Mammary epithelial cell (primary cell): ENCODE measurements at regions of chr4 and their contacts with region 1.

Region 1: GRCh38 chr4:185711726-185712125 is 100.3 kb downstream of the SORBS2 start:
- DNase-seq: peak; percentile 82
- H3K4me3 ChIP-seq: no peak overlapping the region
- H3K27ac ChIP-seq: peak overlapping the region; percentile 8
- H3K4me1 ChIP-seq: peaks cover 33% of the 10 kb centered on the region
- H3K27me3 ChIP-seq: no peaks in the 10 kb centered on the region
- CTCF ChIP-seq: no peak

Region 2: DNA sequence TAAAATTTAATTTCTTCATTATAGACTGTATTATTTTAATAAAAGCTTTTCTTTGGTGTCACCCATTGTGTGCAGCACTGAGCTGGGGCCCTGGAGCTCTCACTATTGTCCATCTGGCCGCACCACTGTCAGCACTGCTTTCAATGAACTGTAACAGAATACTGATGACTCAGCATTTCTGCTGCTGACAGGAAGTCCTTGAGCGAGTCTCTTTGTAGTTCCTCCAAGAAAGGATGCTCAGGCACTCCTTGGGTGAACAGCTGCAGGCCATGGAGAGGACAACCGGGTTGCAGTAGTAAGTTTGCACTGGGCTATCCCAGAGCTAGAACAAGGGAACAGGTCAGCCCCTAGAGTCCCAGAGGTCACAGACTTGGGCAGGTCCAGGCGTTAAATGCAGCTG is 18.7 kb after region 1 on chr4:
- CTCF ChIA-PET with region 1: interaction called, 5 read pairs
- dilution Hi-C with region 1: no loop called
- in situ Hi-C with region 1: no loop called
- intact Hi-C with region 1: loop called (anchors 2 kb)
- DNase-seq: peak; percentile 27
- H3K4me3 ChIP-seq: no peak overlapping the region
- H3K27ac ChIP-seq: peak overlapping the region; percentile 71
- H3K4me1 ChIP-seq: peaks cover 9% of the 10 kb centered on the region
- H3K27me3 ChIP-seq: no peaks in the 10 kb centered on the region
- CTCF ChIP-seq: no peak

Region 3: DNA sequence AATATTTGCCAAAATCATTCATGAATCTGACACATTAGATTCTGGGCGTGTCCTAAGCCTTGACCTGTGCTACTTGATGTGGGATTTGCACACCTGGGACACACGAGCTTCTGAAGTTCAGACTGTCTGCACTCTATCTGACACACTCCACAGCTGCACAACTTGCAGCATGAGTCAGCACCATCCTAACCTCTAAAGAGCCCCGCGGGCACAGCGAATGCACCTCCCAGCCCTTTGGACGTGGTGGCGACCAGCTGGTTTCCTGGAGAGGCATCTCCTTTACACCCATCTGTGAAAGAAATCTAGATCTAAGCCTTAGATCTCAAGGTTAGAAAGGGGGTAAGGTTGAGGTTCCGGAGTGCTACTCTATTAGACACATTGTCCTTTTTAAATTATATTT is 31.0 kb after region 1 on chr4:
- CTCF ChIA-PET with region 1: no interaction called
- dilution Hi-C with region 1: no loop called
- in situ Hi-C with region 1: no loop called
- intact Hi-C with region 1: no loop called
- DNase-seq: peak; percentile 60
- H3K4me3 ChIP-seq: no peak overlapping the region
- H3K27ac ChIP-seq: no peak overlapping the region
- H3K4me1 ChIP-seq: peaks cover 5% of the 10 kb centered on the region
- H3K27me3 ChIP-seq: no peaks in the 10 kb centered on the region
- CTCF ChIP-seq: no peak